ENCODE measurements at regions of chr1 and their contacts with region 1.

Region 1: DNA sequence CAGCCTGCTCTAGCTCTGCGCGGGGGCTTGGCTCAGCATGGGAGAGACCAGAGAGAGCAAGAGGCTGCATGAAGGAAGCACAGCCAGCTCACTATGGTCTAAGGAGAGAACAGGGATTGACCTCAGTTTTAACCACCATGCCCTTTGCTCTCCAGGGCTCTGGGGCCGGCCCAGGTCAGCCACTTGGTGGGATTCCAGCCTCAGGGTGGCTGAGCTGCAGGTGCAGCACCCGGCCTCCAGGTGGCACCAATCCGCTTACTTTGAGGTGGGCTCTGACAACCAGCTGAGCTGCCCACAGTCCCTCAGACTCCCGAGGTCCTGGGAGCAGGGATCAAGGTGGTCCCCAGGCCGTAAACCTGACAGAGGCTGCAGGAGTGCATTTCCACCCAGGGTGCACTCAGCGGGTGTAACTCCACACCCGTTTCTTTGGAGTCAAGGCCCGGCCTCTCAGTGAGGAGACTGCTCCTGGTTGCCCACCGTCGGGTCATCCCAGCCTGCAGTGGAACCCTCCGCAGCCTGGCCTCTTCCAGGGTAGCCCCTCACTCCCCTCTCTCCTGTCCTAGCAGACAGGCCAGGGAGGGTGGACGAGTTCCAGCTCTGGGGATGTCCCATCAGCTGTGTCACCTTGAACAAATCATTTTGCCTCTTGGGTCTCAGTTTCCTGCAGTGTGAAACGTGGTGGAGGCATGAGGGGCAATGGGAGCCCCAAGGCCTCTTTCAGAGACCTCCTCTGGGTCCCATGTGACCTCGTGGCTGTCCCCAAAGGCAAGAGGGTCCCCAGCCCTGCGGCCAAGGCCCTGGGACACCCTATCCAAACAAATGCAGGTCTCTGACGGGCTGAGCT is 607 bp upstream of the LGR6 start:
- DNase-seq: peak; percentile 78
- CTCF ChIP-seq: peak; percentile 93

Region 2: DNA sequence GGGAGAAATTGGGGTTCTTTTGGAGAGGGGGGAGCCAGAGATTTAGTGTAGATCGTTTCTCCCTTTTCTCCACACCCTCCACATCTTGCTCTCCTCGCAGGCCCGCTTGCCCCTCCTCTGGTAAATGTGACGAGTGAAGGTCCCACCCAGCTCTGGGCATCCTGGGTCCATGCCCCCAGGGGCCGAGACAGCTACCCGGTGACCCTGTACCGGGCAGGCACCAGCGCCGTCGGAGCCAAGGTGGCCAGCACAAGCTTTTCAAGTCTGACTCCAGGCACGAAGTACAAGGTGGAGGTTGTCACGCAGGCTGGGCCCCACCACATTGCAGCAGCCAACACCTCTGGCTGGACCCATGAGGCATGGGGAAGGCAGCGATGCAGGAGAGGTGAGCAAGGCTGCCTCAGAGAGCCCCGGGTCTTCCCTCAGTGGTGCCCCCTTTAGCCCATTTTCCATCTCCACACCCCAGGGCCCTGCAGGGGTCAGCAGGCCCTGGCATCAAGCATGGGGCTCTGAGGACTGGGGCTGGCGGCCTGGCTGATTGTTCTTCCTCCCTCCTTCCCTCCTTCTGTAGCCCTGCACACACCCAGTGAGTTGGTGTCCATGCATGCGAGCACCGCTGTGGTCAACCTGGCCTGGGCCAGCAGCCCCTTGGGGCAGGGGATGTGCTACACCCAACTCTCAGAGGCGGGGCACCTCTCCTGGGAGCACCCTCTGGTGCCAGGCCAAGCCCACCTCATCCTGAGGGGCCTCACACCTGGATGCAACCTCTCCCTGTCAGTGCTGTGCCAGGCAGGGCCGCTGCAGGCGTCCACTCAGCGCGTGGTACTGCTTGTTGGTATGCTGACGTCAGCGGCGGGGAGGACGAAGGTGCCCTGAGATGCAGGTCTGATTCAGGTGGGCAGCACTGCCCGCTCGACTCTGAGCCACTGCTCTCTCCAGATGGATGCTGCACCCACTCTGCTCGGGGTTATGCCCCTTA is 15.8 kb before region 1 on chr1:
- CTCF ChIA-PET with region 1: interaction called, 48 read pairs
- POLR2A ChIA-PET with region 1: interaction called, 3 read pairs
- DNase-seq: no peak
- CTCF ChIP-seq: no peak

Region 3: DNA sequence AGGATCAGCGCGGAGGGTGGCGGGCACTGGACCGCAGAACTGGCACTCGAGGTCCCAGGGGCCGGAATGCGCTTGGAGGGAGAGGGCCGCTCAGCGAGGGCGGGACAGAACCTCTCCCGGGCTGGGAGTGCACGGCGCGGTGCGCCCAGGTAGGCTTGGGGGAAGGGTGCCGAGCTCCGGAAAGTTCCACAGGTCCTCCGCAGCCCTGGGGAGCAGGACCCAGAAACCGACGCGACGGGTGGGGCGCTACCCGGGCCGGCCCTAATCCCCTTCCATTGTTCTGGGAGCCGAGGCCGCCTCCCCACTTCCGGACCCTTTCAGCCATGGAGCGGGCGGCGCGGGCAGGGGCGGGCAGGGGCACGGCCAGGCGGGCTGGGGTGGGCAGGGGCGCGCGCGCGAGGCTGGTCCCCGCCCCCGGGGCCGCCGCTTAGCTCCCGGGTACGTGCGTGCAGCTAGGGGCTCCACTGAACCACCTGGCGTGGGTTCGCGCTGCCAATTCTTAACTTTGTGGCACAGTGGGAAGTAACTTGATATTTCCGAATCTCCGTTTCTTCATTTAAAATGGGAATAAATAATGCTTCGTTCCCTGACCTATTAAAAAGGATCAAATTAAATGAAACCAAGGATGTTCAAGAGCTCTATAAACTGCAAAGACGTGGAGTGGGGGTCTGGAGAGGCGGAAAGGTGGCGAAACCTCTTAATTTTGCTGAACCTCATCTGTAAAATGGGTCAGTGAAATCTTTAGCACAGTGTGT is 21.3 kb after region 1 on chr1:
- CTCF ChIA-PET with region 1: interaction called, 10 read pairs
- POLR2A ChIA-PET with region 1: no interaction called
- DNase-seq: no peak
- CTCF ChIP-seq: no peak

Region 4: DNA sequence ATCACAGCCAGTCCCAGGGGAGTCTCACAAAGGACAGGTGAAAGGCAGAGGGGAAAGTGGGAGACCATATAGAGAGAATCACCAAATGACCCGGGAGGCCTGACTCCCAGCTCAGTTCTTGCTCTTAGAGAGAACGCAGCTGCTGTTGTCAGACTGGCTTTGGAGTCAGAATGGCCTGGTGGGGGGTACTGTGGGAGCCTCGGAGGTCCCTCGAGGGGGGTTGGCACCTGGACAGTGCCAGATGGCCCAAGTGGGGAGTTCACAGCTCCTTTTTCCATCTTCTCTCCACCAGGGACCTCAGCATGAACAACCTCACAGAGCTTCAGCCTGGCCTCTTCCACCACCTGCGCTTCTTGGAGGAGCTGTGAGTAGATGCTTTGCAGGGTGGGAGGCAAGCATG is 32.1 kb after region 1 on chr1:
- CTCF ChIA-PET with region 1: interaction called, 10 read pairs
- POLR2A ChIA-PET with region 1: no interaction called
- DNase-seq: no peak
- CTCF ChIP-seq: no peak

Region 5: DNA sequence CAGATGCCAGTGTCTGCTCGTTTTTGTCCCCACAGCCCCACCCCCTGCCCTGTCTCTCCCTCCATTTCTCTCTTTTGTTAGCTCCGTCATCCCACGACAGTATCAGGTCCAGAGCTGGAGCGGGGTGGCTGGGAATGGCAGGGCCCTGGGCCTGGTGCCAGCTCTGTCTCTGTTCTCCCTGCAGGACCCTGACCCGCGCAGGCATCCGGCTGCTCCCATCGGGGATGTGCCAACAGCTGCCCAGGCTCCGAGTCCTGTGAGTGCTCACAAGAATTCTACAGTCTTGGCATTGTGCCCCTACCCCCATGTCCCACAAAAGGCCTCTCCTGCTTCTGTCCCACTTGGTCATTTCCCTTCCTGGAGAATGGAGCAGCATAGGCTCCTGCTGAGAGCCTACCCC is 111.4 kb after region 1 on chr1:
- CTCF ChIA-PET with region 1: interaction called, 24 read pairs
- POLR2A ChIA-PET with region 1: no interaction called
- DNase-seq: no peak
- CTCF ChIP-seq: no peak

Region 6: DNA sequence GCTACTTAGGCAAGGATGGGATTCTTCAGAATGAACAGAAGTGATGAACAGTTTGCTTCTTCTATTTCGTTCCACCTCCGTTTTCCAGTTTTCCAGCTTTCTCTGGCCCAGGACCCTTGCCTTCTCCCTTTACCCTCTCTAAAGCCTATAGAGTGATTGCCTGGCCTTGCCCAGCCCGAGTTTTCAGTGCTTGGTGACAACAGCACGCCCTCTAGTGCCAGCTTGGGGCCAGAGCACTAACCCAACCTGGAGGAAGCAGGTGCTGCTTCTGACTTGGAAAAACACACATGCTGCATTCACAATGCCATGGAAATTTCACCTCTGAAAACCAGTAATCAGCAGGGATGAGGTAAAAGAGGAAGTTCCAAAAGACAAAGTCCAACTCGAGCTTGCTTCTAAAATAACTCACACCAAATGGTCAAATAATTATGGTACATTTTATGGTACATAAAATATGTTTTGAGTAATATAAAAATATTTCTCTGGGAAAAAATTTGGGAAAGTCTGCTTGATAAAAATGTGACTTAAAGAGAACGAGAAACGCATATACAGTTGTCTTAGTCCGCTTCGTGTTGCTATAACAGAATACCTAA is 122.7 kb after region 1 on chr1:
- CTCF ChIA-PET with region 1: interaction called, 48 read pairs
- POLR2A ChIA-PET with region 1: no interaction called
- DNase-seq: peak; percentile 80
- CTCF ChIP-seq: peak; percentile 96

Region 7: DNA sequence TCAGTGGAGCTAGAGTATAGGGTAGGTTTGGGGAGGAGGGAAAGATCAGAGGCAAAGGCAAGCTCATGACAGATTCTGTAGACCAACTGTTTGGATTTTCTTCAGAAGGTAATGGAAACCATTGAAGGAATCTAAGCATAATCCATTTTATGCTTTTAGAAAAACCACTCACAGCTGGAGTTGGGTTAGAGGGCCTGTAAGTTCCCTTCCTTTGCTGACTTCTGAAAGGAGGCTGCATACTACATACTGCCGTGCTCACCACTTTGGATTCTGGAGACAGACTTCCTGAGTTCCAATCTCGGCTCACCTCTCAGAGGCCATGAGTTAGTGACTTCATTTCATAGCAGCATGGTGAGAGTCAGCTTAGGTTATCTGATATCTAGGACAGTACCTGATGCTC is 523.7 kb after region 1 on chr1:
- CTCF ChIA-PET with region 1: interaction called, 35 read pairs
- POLR2A ChIA-PET with region 1: no interaction called
- DNase-seq: no peak
- CTCF ChIP-seq: no peak

Measured in GM10248 (cell line).